HCT116 (cell line): ENCODE measurements at regions of chr2 and their contacts with region 1.

Region 1: DNA sequence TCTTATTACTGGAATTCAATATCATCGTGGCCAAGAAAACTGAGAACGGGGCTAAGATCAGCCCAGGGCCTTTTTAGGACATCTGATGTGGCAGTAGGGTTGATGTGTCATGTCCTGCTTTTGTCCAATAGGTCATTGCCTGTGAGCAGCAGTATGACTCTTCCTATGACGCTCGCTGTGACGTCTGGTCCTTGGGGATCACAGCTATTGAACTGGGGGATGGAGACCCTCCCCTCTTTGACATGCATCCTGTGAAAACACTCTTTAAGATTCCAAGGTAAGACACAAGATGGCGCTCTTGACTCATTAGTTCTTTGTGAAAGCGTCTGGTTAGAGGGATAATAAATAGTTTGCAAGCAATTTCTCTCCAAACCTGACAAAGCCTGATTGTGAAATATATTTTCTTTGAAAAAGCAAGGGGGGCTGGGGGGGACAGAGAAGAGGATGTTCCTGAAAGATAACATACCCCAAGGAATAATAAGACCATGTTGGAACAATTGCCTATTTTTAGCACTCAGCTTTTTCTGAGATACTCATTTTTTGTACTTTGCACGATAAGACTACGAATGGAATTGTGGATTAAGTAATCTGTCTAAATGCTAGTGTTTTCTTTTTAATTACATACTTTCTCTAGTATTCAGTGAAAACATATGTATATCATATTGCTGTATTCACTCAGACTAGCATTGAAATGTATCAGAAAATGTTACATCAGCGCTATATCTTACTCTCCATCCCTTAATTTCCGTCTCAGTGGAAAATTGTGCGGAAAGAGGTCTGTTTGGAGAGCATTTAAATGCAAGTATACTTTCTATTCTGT is 58.1 kb downstream of the MYO3B start:
- DNase-seq: peak; percentile 60
- ATAC-seq: peak; percentile 76
- H3K4me3 ChIP-seq: no peak overlapping the region
- H3K27ac ChIP-seq: no peak overlapping the region
- H3K4me1 ChIP-seq: peaks cover 3 to 12% of the 10 kb centered on the region in 2 experiments; a peak in 2 of 4 replicates
- H3K27me3 ChIP-seq: peaks cover 19% of the 10 kb centered on the region
- CTCF ChIP-seq: peak; percentile 53 to 81 (median 67); a peak in 5 of 6 replicates
- POLR2A ChIP-seq: no peak
- RAD21 ChIP-seq: peak; percentile 84

Region 2: GRCh38 chr2:169446452-169446851 is 789.6 kb before region 1 on chr2:
- CTCF ChIA-PET with region 1: no interaction called
- POLR2A ChIA-PET with region 1: no interaction called
- RAD21 ChIA-PET with region 1: no interaction called
- intact Hi-C with region 1: loop called (anchors 10 kb)
- DNase-seq: no peak
- ATAC-seq: no peak
- H3K4me3 ChIP-seq: no peak overlapping the region
- H3K27ac ChIP-seq: no peak overlapping the region
- H3K4me1 ChIP-seq: no peaks in the 10 kb centered on the region
- H3K27me3 ChIP-seq: no peaks in the 10 kb centered on the region
- CTCF ChIP-seq: no peak
- POLR2A ChIP-seq: no peak
- RAD21 ChIP-seq: no peak

Region 3: DNA sequence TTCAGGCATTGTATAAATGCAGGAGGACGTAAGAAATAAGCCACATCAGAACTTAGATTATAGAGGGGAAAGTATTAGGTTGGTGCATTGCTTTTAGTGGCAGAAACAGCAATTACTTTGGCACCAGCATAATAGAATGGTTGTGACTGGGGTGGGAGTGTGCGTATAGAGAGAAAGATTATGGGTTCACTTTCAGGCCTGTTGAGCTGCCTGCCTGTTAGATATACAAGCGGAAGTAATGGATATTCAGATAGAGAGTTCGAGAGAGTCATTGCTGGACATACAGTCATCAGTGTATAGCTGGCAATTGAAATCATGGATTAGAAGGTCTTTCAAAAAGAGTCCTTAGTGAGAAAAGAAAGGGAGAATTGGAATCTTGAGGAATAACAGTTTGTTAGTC is 197.3 kb before region 1 on chr2:
- CTCF ChIA-PET with region 1: no interaction called
- POLR2A ChIA-PET with region 1: no interaction called
- RAD21 ChIA-PET with region 1: no interaction called
- intact Hi-C with region 1: no loop called
- DNase-seq: no peak
- ATAC-seq: no peak
- H3K4me3 ChIP-seq: no peak overlapping the region
- H3K27ac ChIP-seq: no peak overlapping the region
- H3K4me1 ChIP-seq: no peaks in the 10 kb centered on the region
- H3K27me3 ChIP-seq: no peaks in the 10 kb centered on the region
- CTCF ChIP-seq: no peak
- POLR2A ChIP-seq: no peak
- RAD21 ChIP-seq: no peak

Region 4: DNA sequence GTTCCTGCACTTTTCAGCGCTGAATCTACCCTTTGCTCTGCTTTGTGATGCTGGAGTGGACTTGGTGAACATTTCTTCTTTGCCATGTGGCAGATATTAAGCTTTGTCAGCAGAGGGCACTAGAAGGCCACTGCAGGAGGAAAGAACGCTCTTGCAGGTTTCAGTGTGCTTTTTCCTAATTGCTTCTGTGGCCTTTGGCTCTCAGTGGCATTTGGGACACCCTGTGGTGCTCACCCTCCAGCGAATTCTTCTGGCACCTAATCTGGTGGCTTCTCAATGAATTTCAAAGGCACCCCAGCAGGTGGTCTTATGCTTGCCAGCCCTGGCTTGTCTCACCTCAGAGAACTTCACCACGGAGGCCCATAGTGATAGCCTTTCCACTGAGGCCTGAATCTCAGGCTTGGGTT is 88.6 kb after region 1 on chr2:
- CTCF ChIA-PET with region 1: interaction called, 5 read pairs
- POLR2A ChIA-PET with region 1: no interaction called
- RAD21 ChIA-PET with region 1: no interaction called
- intact Hi-C with region 1: loop called (anchors 5 kb)
- DNase-seq: peak; percentile 42
- ATAC-seq: peak; percentile 80
- H3K4me3 ChIP-seq: no peak overlapping the region
- H3K27ac ChIP-seq: no peak overlapping the region
- H3K4me1 ChIP-seq: no peaks in the 10 kb centered on the region
- H3K27me3 ChIP-seq: no peaks in the 10 kb centered on the region
- CTCF ChIP-seq: peak; percentile 80 to 84 (median 84)
- POLR2A ChIP-seq: no peak
- RAD21 ChIP-seq: peak; percentile 87

Region 5: DNA sequence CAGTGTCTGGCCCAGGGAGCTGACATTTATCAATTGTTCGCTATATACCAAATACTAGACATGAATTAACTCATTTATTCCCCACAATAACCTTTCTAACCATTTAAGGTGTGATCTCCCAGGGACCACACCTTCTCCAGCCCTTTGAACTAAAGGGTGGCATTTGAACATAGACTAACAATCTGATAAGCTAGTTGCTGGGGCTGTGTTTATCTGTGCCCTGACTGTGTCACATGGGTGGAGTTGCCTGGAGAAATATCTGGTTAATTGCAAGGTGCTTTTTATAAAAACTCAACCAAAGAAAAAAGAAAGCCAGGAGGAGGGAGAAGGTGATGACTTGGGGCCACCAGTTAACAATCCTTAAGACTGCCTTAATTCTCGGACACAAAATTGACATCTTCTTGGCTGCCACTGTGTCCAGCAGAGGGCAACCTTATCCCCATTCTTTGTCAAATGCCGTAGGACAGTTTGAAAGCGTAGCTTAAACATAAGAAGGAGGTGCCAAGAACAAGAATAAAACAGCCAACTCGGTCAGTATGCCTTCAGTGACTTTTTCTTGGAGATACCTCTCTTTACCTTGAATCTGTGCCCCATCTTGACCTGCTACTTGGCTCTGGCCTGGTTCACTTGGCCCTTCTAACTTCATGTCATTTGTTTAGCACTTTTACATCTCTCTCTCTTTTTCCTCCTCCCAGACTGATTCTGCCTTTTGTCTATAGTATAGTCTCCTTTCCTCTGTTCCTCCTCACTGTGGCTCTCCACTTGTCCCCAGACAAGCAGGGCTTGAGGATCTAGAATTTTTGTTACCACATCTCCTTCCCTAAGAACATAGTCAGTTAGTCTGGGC is 125.2 kb after region 1 on chr2:
- CTCF ChIA-PET with region 1: interaction called, 19 read pairs
- POLR2A ChIA-PET with region 1: no interaction called
- RAD21 ChIA-PET with region 1: no interaction called
- intact Hi-C with region 1: loop called (anchors 1 kb)
- DNase-seq: peak; percentile 47
- ATAC-seq: peak; percentile 98
- H3K4me3 ChIP-seq: no peak overlapping the region
- H3K27ac ChIP-seq: no peak overlapping the region
- H3K4me1 ChIP-seq: peaks cover 0 to 6% of the 10 kb centered on the region in 2 experiments; a peak in 1 of 4 replicates
- H3K27me3 ChIP-seq: peaks cover 11% of the 10 kb centered on the region; the same call in 1 of the 2 replicates
- CTCF ChIP-seq: peak; percentile 75 to 89 (median 83)
- POLR2A ChIP-seq: no peak
- RAD21 ChIP-seq: peak; percentile 72

Region 6: DNA sequence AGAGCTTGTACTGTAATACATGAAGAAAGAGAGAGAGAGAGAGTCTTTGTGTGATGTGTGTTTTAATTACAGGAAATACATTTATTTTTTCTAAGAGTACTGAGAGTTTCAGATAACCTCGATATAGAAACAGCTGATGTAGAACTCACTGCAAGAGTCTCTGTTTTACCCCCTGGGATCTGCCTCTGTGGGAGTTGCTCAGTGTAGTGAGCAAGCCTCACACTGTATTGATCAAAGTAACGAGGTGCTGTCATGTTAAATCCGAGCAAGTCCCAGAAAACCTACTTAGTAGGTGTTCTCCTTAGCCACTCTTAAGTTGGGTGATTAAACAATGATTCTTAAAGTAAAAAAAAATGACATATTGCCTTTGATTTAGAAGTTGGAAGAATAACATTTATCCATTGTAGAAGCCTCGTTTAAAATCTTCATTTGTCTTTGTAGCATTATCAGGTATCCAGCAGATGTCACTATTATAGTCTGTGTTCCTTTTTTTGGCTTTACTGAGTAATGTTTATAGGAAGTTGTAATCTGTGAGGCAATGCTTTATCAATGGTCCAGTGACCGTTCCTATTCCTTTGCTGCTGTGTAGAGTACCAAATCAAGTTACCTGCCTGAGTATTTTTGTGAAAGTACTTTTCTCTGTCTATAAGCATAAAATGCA is 160.9 kb after region 1 on chr2:
- CTCF ChIA-PET with region 1: interaction called, 4 read pairs
- POLR2A ChIA-PET with region 1: no interaction called
- RAD21 ChIA-PET with region 1: no interaction called
- intact Hi-C with region 1: loop called (anchors 2 kb)
- DNase-seq: no peak
- ATAC-seq: peak; percentile 60
- H3K4me3 ChIP-seq: no peak overlapping the region
- H3K27ac ChIP-seq: no peak overlapping the region
- H3K4me1 ChIP-seq: no peaks in the 10 kb centered on the region
- H3K27me3 ChIP-seq: no peaks in the 10 kb centered on the region
- CTCF ChIP-seq: peak; percentile 31 to 67 (median 62); a peak in 5 of 6 replicates
- POLR2A ChIP-seq: no peak
- RAD21 ChIP-seq: peak; percentile 65

Region 7: DNA sequence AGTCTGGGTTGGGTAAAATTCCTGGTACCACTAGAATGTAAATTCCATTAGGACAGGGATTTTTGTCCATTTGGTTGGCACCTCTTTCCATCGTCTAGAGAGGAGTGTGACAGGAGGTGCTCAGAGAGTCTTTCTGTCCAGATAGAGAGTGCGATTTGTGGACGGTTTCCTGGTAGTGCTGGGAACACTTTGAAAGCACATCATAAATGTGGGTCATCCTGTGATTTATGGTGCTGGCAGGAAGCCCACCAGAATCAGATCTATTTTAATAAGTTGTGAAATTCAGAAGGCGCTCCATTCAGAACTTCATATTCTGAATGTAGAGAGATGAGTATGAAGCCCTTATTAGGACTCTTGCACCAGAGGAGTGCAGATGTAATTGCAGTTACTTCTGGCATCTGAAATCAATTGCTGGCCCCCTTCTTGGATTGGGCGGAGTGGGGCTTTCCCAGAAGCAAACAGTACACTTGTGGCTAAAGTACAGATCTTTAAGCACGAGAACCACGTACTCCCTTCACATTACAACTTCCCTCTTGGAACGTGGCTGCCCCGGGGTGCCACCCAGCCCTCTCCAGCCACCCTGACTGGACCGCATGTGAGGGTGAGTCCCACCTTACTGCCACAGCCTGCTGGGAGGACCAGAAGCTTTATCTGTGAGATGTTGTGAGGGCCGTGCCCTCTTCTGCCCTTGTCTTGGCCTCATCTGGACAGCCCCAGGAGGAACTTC is 185.1 kb after region 1 on chr2:
- CTCF ChIA-PET with region 1: no interaction called
- POLR2A ChIA-PET with region 1: no interaction called
- RAD21 ChIA-PET with region 1: no interaction called
- intact Hi-C with region 1: no loop called
- DNase-seq: no peak
- ATAC-seq: no peak
- H3K4me3 ChIP-seq: no peak overlapping the region
- H3K27ac ChIP-seq: no peak overlapping the region
- H3K4me1 ChIP-seq: no peaks in the 10 kb centered on the region
- H3K27me3 ChIP-seq: no peaks in the 10 kb centered on the region
- CTCF ChIP-seq: no peak
- POLR2A ChIP-seq: no peak
- RAD21 ChIP-seq: no peak